PC-9 (cell line): ENCODE measurements at regions of chr2 and their contacts with region 1.

Region 1: DNA sequence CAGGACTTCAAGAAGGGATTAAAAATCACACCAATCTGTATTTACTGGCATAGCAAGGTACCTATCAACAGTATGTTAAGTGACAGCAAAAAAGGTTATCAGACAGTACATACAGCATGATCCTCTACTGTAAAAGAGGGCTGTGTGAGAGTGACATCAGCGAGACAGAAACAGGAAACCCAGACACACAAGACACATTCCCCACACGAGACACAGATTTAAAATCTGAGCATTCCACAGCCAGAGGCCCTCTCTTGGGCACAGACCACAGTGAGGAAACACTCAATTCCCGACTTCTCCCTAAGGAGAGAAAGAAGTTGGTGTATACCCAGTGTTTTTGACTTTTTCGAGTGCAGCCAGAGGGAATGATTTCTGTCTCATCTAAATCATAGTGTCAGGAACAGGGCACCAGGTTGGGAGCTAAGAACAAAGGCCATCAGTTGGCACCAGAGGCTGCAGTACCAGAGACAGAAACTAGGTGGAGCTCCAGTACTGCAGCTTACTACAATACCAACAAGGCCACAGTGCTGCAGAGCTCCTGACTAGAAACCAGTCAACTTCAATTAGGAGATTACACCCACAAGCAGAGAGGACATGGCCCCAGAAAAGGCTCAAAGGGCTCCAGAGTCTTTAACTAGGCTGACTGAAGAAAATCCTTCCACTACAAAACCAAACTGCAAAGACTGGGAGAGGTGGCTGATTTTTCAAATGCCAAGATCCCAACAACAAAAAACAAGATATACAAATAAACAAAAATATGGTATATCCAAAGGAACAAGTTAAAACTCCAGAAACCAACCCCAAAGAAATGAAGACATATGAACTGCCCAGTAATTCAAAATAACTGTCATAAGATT is 41.0 kb downstream of the UNC50 start:
- DNase-seq: peak; percentile 75 to 78
- H3K4me3 ChIP-seq: no peak overlapping the region
- H3K27ac ChIP-seq: no peak overlapping the region
- H3K4me1 ChIP-seq: no peaks in the 10 kb centered on the region
- H3K27me3 ChIP-seq: no peaks in the 10 kb centered on the region
- CTCF ChIP-seq: peak; percentile 100

Region 2: DNA sequence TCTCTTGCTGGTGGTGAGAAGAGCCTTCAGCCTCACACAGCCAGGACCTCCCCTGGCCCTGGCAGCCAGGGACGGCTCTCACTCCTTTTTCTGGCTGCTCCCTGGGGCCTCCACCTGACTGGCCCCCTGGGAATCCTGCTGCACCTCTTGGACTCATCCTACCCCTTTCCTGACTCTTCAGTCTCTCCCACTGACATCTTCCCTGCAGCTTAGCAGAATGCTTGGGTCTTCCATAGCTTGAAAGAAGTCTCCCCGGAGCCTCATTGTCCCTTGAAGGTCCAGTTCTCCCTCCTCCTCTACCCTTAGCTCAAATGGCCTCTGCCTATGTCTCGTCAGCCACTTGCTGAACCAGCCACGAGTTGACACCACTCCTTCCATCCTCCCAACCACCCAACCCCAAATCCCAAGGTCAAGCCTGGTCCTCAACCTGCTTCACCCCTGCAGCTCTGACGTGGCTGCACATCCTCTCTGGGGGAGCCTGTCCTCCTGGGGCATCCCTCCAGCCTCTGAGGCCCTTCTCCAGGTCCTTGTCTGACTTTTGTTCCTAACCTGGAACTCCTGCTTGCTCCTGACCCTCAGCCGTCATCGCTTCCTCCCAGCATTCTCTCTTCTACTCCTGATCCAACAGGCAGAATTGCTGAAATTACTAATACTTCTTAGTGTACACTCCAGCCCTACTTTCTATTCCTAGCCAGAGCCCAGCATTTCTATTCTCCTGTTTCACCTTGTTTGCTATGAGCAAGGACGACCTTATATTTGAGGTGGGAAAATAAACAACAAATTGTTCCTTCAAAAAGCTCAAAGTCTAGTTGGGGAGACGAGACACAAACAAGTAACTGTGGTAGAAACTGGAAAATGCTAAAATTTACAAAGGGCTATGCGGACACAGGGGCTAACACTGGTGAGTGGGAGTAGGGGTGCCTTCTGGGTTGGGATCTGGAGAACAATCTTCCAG is 150.3 kb after region 1 on chr2:
- CTCF ChIA-PET with region 1: no interaction called
- POLR2A ChIA-PET with region 1: no interaction called
- intact Hi-C with region 1: loop called (anchors 1 kb)
- DNase-seq: no peak
- H3K4me3 ChIP-seq: no peak overlapping the region
- H3K27ac ChIP-seq: peak overlapping the region; percentile 8; the same call in 1 of the 2 replicates
- H3K4me1 ChIP-seq: peaks cover 12% of the 10 kb centered on the region
- H3K27me3 ChIP-seq: no peaks in the 10 kb centered on the region
- CTCF ChIP-seq: no peak

Region 3: DNA sequence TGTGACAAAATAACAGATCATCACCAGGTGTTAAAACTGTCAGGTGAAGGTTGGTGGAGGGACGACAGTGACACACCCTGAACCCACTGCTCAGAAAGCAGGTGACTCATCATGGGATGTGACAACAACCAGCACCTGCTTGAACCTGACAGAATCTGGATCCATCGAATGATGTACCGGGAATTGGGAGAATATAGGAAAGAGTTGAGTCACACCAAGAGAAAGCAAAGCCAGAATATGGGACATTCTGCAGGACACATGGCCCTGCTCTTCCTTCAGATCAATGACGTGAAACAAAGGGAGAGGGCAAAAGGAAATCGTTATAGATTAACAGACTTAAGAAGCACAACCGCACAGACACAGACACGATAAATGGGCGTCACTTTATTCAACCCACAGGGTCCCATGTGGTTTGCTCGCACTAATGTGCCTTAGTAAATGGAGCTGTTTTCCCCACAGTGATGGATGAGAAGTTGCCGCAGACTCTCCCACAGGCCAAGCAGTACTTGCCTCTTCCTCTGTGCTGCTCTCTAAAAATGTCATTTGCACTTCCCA is 186.5 kb after region 1 on chr2:
- CTCF ChIA-PET with region 1: interaction called, 13 read pairs
- POLR2A ChIA-PET with region 1: no interaction called
- intact Hi-C with region 1: loop called (anchors 1 kb)
- DNase-seq: no peak
- H3K4me3 ChIP-seq: no peak overlapping the region
- H3K27ac ChIP-seq: no peak overlapping the region
- H3K4me1 ChIP-seq: peaks cover 25% of the 10 kb centered on the region
- H3K27me3 ChIP-seq: no peaks in the 10 kb centered on the region
- CTCF ChIP-seq: no peak

Region 4: DNA sequence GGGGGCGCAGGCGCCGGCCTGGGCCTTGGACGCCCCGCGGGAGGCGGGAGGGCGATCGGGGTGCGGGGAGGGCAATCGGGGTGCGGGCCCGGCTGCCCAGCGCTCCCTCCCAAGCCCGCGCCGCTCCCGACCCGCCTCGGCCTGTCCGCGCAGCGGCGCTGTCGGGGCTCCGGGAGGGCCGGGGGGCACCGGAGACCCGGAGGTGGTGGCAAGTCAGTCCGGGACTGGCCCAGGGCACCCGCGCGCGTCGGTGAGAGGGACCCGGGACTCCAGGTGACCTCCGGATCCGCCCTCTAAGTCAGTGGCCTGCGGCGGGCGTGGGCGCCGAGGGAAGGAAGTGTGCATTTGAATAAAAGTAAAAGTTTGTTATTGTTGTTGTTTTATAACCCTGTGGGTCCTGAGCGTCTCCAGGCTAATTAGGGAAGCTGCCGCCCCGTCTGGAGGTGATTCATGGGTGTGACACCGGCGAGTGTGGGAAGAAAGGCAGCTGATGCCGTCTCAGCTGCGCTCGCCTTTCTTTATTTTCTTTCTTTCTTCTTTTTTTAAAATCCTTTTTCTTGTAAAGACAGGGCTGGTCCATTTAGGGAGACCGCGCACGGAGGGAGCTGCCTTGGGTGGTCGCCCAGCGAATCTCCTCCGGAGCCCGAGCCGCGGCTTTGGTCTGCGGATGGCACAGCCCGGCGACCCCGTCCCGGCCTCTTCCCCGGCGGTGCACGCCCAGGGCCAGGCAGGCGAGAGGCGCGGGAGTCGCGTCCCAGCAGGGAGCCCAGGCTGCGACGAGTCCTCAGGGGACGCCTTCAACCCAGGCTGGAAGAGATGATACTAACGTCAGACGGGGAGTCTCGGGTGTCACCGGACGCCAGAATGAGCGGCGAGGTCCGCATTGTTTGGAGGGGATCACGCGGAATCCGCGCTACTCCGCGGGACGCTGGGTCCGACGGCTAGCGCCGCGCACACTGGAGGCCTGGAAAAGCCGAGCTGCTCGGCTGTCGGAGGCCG is 287.3 kb after region 1 on chr2:
- CTCF ChIA-PET with region 1: interaction called, 5 read pairs
- POLR2A ChIA-PET with region 1: no interaction called
- intact Hi-C with region 1: loop called (anchors 5 kb)
- DNase-seq: no peak
- H3K4me3 ChIP-seq: peak overlapping the region; percentile 54; the same call in 1 of the 2 replicates
- H3K27ac ChIP-seq: no peak overlapping the region
- H3K4me1 ChIP-seq: no peaks in the 10 kb centered on the region
- H3K27me3 ChIP-seq: peaks cover 47% of the 10 kb centered on the region
- CTCF ChIP-seq: no peak